HEK293 (cell line): ENCODE measurements at regions of chr16 and their contacts with region 1.

Region 1: GRCh38 chr16:84754353-84754856 is 54.6 kb downstream of the USP10 start:
- H3K4me3 ChIP-seq: no peak overlapping the region
- H3K27ac ChIP-seq: no peak overlapping the region
- H3K4me1 ChIP-seq: peaks cover 4% of the 10 kb centered on the region; the same call in 1 of the 2 replicates
- CTCF ChIP-seq: peak; percentile 76

Region 2: GRCh38 chr16:84714028-84714427 is 40.4 kb before region 1 on chr16:
- CTCF ChIA-PET with region 1: no interaction called
- POLR2A ChIA-PET with region 1: no interaction called
- H3K4me3 ChIP-seq: no peak overlapping the region
- H3K27ac ChIP-seq: no peak overlapping the region
- H3K4me1 ChIP-seq: peaks cover 21% of the 10 kb centered on the region
- CTCF ChIP-seq: no peak

Region 3: GRCh38 chr16:84726079-84726668 is 28.2 kb before region 1 on chr16:
- CTCF ChIA-PET with region 1: interaction called, 15 read pairs
- POLR2A ChIA-PET with region 1: no interaction called
- H3K4me3 ChIP-seq: no peak overlapping the region
- H3K27ac ChIP-seq: no peak overlapping the region
- H3K4me1 ChIP-seq: peaks cover 27% of the 10 kb centered on the region
- CTCF ChIP-seq: peak; percentile 94

Region 4: GRCh38 chr16:84765616-84766580 is 11.5 kb after region 1 on chr16:
- CTCF ChIA-PET with region 1: interaction called, 13 read pairs
- POLR2A ChIA-PET with region 1: no interaction called
- H3K4me3 ChIP-seq: no peak overlapping the region
- H3K27ac ChIP-seq: no peak overlapping the region
- H3K4me1 ChIP-seq: no peaks in the 10 kb centered on the region
- CTCF ChIP-seq: no peak

Region 5: GRCh38 chr16:84933774-84934631 is 179.6 kb after region 1 on chr16:
- CTCF ChIA-PET with region 1: interaction called, 15 read pairs
- POLR2A ChIA-PET with region 1: no interaction called
- H3K4me3 ChIP-seq: no peak overlapping the region
- H3K27ac ChIP-seq: no peak overlapping the region
- H3K4me1 ChIP-seq: no peaks in the 10 kb centered on the region; the same call in 1 of the 2 replicates
- CTCF ChIP-seq: no peak

Region 6: DNA sequence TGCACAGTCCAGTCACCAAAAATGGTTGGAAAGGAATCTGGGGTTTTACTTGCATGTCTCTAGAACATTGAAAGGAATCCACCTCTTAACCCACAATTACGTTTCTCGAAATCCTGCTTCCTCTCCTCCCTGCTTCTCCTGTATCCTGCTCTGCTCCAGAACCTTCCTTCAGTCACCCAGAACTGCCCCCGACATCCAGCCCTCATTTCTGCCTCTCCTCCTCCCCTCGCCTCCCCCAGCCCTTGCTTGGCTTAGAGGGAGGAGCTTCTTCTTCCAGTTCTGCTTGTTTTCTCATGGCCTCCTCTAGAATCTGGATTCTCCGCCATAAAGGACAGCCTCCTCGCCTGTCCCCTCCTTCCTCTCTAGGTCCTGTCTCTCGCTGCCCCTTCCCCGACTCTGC is 208.7 kb after region 1 on chr16:
- CTCF ChIA-PET with region 1: interaction called, 144 read pairs
- POLR2A ChIA-PET with region 1: no interaction called
- H3K4me3 ChIP-seq: no peak overlapping the region
- H3K27ac ChIP-seq: no peak overlapping the region
- H3K4me1 ChIP-seq: no peaks in the 10 kb centered on the region
- CTCF ChIP-seq: no peak